Esophagus muscularis mucosa (tissue), 4 donors: ENCODE measurements at regions of chr9 and their contacts with region 1.

Region 1: DNA sequence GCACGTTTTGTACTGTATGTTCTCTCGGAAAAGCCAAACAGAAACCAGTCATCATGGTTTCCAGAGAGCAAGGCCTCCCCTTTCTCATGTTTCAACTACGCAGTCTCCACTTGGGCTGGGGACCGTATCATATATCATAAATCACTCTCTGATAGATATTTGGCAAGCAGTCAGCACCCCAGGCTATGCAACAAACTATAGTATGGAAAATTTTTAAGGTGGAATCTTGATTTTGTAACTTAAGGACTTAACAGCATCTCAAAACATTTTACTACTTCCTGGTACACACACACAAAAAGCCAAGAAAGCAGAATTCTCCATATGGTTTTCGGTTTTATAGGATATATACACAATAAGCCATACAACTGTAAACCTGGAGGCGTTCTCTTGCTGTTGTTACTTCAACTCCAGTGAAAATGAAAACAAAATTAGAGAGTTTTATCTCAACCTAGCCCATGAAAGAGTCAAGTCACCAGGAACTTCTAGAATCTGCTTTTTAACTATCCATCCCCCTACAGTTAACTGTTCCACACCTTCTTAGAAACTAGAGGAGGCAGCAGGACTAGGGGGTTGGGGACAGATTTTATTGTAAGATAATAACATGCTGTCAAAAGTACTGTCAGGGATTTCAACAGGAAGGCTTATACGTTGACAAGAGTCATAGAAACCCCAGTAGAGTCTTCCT is 283.4 kb downstream of the NFIB start:
- DNase-seq: no peak
- H3K4me3 ChIP-seq: peak overlapping the region; percentile 30 to 48 (median 40)
- H3K27ac ChIP-seq: peak overlapping the region; percentile 77 to 85 (median 80)
- H3K4me1 ChIP-seq: peaks cover 40 to 51% (median 47%) of the 10 kb centered on the region in 4 donors
- H3K27me3 ChIP-seq: no peaks in the 10 kb centered on the region
- CTCF ChIP-seq: no peak
- EP300 ChIP-seq: no peak
- POLR2A ChIP-seq: no peak

Region 2: GRCh38 chr9:14096258-14096922 is 65.9 kb after region 1 on chr9:
- intact Hi-C with region 1: loop called (anchors 5 kb)
- DNase-seq: no peak
- H3K4me3 ChIP-seq: peak overlapping the region; percentile 26 to 40 (median 39)
- H3K27ac ChIP-seq: peak overlapping the region; percentile 58 to 79 (median 74)
- H3K4me1 ChIP-seq: peaks cover 30 to 47% (median 44%) of the 10 kb centered on the region in 4 donors
- H3K27me3 ChIP-seq: no peaks in the 10 kb centered on the region
- CTCF ChIP-seq: no peak
- EP300 ChIP-seq: no peak
- POLR2A ChIP-seq: no peak

Region 3: GRCh38 chr9:14400658-14400995 is 370.1 kb after region 1 on chr9:
- intact Hi-C with region 1: no loop called
- DNase-seq: no peak
- H3K4me3 ChIP-seq: no peak overlapping the region
- H3K27ac ChIP-seq: no peak overlapping the region
- H3K4me1 ChIP-seq: peaks cover 0 to 7% (median 2%) of the 10 kb centered on the region in 4 donors
- H3K27me3 ChIP-seq: no peaks in the 10 kb centered on the region
- CTCF ChIP-seq: peak; percentile 36 to 55 (median 46)
- EP300 ChIP-seq: no peak
- POLR2A ChIP-seq: no peak